ENCODE measurements at regions of chr11 and their contacts with region 1.

Region 1: GRCh38 chr11:64352995-64353714 is 5.8 kb upstream of the RPS6KA4 start:
- DNase-seq: no peak
- ATAC-seq: no peak
- H3K4me3 ChIP-seq: no peak overlapping the region
- H3K27ac ChIP-seq: no peak overlapping the region
- H3K4me1 ChIP-seq: peaks cover 53% of the 10 kb centered on the region
- H3K27me3 ChIP-seq: no peaks in the 10 kb centered on the region
- CTCF ChIP-seq: no peak

Region 2: GRCh38 chr11:63573881-63574855 is 779.0 kb before region 1 on chr11:
- CTCF ChIA-PET with region 1: no interaction called
- POLR2A ChIA-PET with region 1: no interaction called
- in situ Hi-C with region 1: no loop called
- intact Hi-C with region 1: no loop called
- DNase-seq: no peak
- ATAC-seq: peak; percentile 92
- H3K4me3 ChIP-seq: peak overlapping the region; percentile 19 to 44; a peak in 3 of 4 replicates
- H3K27ac ChIP-seq: peak overlapping the region; percentile 62
- H3K4me1 ChIP-seq: peaks cover 7% of the 10 kb centered on the region
- H3K27me3 ChIP-seq: no peaks in the 10 kb centered on the region; the same call in 1 of the 2 replicates
- CTCF ChIP-seq: no peak

Region 3: GRCh38 chr11:64341851-64342791 is 11.0 kb before region 1 on chr11:
- CTCF ChIA-PET with region 1: interaction called, 33 read pairs
- POLR2A ChIA-PET with region 1: interaction called, 7 read pairs
- in situ Hi-C with region 1: no loop called
- intact Hi-C with region 1: no loop called
- DNase-seq: peak; percentile 43
- ATAC-seq: peak; percentile 95
- H3K4me3 ChIP-seq: peak overlapping the region; percentile 38 to 60
- H3K27ac ChIP-seq: peak overlapping the region; percentile 78
- H3K4me1 ChIP-seq: peaks cover 22% of the 10 kb centered on the region
- H3K27me3 ChIP-seq: no peaks in the 10 kb centered on the region
- CTCF ChIP-seq: peak; percentile 47; the same call in 1 of the 2 replicates

Region 4: DNA sequence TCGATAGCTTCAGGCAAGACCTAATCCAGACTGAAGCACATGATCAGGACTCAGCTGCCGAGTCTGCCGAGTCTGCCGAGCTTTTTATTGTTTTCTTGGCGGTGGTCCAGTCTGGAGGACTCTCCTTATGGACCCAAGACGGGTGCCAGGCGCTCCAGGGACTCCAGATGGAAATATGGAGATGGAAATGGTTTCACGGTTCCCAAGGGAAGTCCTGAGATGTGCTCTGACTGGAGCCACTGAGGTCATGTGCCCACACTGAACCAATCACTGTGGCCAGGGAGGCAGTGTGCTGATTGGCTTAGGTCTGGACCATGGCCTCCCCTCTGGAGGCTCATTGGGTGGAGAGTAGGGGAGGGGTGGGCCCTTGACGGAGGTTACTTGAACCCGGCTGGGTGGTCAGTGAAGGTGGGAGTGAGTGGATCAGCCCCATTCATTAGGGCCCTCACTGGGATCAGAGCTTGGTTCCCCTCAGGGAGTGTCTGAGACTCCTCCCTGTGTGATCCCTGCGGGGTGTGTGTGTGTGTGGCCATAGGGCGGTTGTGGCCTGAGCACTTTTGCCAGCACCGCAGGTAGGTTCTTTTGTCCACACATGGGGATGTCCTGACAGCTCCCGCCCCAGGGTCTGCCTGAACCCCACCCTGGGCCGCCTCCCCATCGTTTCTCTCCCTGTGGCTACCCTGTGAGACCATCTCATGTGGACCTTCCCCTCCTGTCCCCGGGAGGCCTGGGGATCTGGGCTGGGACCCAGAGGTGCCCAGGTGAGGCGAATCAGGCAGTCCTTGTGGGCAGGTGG is 19.8 kb after region 1 on chr11:
- CTCF ChIA-PET with region 1: interaction called, 10 read pairs
- POLR2A ChIA-PET with region 1: no interaction called
- in situ Hi-C with region 1: no loop called
- intact Hi-C with region 1: no loop called
- DNase-seq: peak; percentile 25
- ATAC-seq: peak; percentile 90
- H3K4me3 ChIP-seq: peak overlapping the region; percentile 30 to 42
- H3K27ac ChIP-seq: no peak overlapping the region
- H3K4me1 ChIP-seq: peaks cover 5% of the 10 kb centered on the region; the same call in 1 of the 2 replicates
- H3K27me3 ChIP-seq: no peaks in the 10 kb centered on the region
- CTCF ChIP-seq: no peak

Measured in Panc1 (cell line).